ENCODE measurements at regions of chr17 and their contacts with region 1.

Region 1: DNA sequence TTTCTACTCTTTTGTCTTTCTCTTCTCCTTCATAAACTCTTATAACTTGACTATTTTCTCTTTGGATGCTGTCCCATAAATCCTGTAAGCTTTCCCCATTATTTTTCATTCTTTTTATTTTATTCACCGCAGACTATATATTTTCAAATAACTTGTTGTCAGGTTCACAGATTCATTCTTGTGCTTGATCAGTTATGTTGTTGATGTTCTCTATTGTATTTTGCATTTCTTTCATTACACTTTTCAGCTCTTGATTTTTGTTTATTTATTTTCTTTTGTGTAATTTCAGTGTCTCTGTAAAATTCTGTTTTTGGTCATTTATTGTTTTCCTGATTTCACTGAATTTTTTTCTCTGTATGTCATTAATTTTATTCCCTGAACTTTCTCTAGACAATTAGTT is 49.2 kb downstream of the EFCAB13 start:
- DNase-seq: no peak
- H3K4me3 ChIP-seq: no peak overlapping the region
- H3K4me3 Mint-ChIP-seq: no peak overlapping the region
- H3K27ac ChIP-seq: no peak overlapping the region
- H3K27ac Mint-ChIP-seq: no peak overlapping the region
- H3K4me1 ChIP-seq: no peaks in the 10 kb centered on the region
- H3K4me1 Mint-ChIP-seq: no peaks in the 10 kb centered on the region
- H3K27me3 ChIP-seq: no peaks in the 10 kb centered on the region
- H3K27me3 Mint-ChIP-seq: peaks cover 4 to 13% of the 10 kb centered on the region in 2 donors

Region 2: DNA sequence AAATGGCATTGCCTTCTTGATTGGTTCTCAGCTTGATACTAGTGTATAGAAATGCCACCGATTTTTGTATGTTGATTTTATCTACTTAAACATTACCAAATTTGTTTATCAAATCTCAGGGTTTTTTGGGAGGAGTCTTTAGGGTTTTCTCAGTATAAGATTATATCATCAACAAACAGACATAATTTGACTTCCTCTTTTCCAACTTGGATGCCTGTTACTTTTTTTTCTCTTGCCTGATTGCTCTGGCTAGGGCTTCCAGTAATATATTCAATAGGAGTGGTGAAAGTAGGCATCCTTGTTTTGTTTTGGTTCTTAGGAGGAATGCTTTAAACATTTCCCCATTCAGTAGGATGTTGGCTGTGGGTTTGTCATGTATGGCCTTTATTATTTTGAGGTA is 20.2 kb before region 1 on chr17:
- CTCF ChIA-PET with region 1: interaction called, 4 read pairs
- POLR2A ChIA-PET with region 1: interaction called, 10 read pairs
- DNase-seq: no peak
- H3K4me3 ChIP-seq: no peak overlapping the region
- H3K4me3 Mint-ChIP-seq: no peak overlapping the region
- H3K27ac ChIP-seq: no peak overlapping the region
- H3K27ac Mint-ChIP-seq: no peak overlapping the region
- H3K4me1 ChIP-seq: no peaks in the 10 kb centered on the region
- H3K4me1 Mint-ChIP-seq: no peaks in the 10 kb centered on the region
- H3K27me3 ChIP-seq: no peaks in the 10 kb centered on the region
- H3K27me3 Mint-ChIP-seq: peaks cover 0 to 16% of the 10 kb centered on the region in 2 donors

Measured in CD8-positive, alpha-beta memory T cell (primary cell).